ENCODE measurements at regions of chr3 and their contacts with region 1.

Region 1: DNA sequence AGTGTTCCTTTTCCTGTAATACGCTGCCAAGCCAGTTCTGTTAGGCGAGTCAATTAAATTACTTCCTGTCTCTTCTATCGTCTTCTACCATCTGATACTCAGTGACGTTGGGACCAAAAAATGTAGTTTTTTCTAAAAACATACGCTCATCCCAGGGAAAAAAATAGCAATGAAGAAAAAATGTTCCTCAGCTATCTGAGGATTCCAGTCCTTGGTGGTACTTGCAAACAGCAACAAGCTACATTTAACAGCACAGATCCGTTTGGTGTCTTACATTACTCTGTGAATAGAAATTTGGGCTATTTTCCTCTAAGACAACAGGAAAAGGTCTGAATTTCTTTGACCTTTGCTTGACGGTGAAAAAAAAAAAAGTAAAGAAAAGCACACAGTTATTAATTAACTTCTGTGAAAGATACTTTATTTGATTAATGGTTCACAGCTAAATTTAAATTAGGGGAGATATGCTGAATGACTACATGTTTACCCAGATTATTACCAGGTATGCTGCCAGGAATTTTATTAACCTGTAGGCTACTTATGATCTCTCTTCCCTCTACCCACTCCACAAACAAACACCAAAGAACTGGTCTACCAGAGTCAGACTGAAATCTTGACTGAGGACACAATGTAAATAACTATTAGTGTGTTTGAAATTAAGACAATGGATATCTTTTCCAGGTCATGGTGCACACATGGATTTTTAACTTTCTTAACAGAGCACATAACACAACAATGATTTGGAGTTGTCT is 254.3 kb upstream of the ZPLD1 start:
- DNase-seq: no peak
- H3K4me3 Mint-ChIP-seq: no peak overlapping the region
- H3K27ac Mint-ChIP-seq: no peak overlapping the region
- H3K4me1 Mint-ChIP-seq: peaks cover 23% of the 10 kb centered on the region
- H3K27me3 Mint-ChIP-seq: no peaks in the 10 kb centered on the region
- CTCF ChIP-seq: no peak

Region 2: DNA sequence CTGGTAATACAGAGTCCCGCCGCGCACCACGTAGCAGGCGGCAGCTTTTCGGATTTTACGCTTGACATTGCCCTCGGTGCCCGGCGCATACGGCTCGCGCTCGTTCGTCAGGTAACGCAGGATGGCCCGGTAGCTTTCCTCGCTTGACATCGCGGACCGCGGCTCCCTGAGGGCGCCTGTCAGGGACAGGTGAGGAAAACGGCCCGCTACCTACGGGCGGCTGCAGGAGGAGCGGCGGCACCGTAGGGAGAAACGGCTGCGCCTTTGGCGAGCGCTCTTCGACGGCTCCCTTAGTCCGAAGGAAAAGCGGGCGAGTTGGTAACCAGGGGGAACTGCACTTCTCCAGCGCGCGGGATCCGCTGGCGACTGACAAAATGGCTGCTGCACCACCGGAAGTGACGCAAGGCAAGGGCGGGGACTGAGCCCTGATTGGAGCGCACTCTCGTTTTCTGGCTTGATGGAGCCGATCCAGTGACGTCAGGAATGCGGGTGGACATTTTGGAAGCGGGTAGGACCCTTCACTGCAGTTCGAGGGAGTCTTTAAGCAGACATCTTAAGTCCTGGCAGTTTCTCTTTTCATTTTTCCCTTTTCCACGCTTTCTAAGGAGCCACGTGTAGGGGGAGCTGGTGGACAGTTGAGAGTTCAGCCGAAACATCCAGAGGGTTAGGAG is 503.6 kb before region 1 on chr3 and contains the start of gene ZBTB11:
- CTCF ChIA-PET with region 1: interaction called, 5 read pairs
- intact Hi-C with region 1: loop called (anchors 5 kb)
- DNase-seq: peak; percentile 99
- H3K4me3 Mint-ChIP-seq: peak within 1 kb of the TSS; percentile 80
- H3K27ac Mint-ChIP-seq: peak within 1 kb of the TSS; percentile 85
- H3K4me1 Mint-ChIP-seq: peaks cover 23% of the 10 kb centered on the region
- H3K27me3 Mint-ChIP-seq: no peaks in the 10 kb centered on the region
- CTCF ChIP-seq: no peak
- total RNA-seq, gene ZBTB11: 34.8 and 36.5 TPM in 2 replicates

Region 3: GRCh38 chr3:101809178-101810021 is 371.1 kb before region 1 on chr3:
- CTCF ChIA-PET with region 1: interaction called, 5 read pairs
- intact Hi-C with region 1: loop called (anchors 5 kb)
- DNase-seq: peak; percentile 34
- H3K4me3 Mint-ChIP-seq: no peak overlapping the region
- H3K27ac Mint-ChIP-seq: no peak overlapping the region
- H3K4me1 Mint-ChIP-seq: no peaks in the 10 kb centered on the region
- H3K27me3 Mint-ChIP-seq: no peaks in the 10 kb centered on the region
- CTCF ChIP-seq: peak; percentile 47

Region 4: DNA sequence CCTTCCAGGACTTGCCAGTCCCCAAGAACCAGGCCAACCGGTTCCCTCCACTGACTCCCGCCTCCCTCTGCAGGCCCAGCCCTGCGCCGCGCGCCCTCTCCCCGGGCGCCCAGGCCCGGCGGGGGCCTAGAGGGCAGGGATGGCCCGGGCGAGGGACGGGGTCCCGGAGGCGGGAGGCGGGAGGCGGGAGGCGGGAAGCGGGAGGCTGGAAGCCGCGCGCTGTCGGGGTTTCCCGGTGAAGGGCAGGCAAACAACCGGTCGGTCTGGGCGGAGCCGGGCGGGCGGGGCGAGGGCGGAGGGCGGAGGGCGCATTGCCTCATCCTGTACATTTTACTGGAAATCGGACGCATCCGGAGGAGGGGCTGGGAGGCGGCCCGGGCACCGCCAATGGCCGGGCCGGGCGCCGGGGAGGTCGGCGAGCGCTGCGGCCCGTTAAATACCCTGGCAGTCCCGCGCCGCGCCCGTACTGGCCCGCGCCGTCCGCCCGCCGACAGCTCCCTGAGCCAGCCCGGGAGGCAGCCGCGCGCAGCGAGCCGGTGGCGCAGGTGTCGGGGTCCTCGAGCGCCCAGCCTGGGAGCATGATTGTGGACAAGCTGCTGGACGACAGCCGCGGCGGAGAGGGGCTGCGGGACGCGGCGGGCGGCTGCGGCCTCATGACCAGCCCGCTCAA is 331.3 kb before region 1 on chr3 and contains the start of gene NFKBIZ:
- CTCF ChIA-PET with region 1: no interaction called
- intact Hi-C with region 1: no loop called
- DNase-seq: peak; percentile 94
- H3K4me3 Mint-ChIP-seq: peak within 1 kb of the TSS; percentile 75
- H3K27ac Mint-ChIP-seq: peak within 1 kb of the TSS; percentile 92
- H3K4me1 Mint-ChIP-seq: peaks cover 24% of the 10 kb centered on the region
- H3K27me3 Mint-ChIP-seq: no peaks in the 10 kb centered on the region
- CTCF ChIP-seq: no peak
- total RNA-seq, gene NFKBIZ: 217 and 227 TPM in 2 replicates

Region 5: DNA sequence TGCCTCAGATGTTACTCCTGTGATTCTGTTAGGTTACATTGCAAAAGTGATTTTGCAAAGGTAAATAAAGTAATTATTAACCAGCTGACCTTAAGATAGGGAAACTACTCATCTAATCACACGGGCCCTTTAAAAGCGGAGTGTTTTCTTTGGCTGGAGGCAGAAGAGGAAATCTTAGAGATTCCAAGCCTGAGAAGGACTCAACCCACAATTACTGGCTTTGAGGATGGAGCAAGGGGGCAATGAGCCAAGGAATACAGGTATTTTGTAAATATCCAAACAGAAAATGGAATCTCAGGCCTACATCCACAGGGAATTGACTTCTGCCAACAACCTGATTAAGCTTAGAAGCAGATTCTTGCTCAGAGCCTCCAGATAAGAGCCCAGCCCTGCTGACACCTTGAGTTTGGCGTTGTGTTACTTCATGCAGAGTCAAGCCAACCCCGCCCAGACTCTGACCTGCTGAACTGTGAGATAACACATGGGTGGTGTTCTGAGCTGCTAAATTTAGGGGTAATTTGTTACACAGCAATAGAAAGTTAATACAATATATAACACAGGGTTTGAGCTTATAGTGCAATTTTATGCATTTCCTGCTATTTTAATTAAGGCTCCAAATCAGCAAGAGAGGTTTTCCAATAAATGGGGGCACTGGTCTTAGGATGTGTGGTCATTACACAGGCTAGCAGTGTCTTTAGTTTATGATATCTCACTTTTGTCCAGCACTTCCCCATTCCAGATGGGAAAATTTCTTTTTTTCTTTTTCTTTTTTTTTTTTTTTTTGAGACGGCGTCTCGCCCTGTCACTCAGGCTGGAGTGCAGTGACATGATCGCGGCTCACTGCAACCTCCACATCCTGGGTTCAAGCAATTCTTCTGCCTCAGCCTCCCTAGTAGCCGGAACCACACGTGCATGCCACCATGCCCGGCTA is 311.7 kb before region 1 on chr3:
- CTCF ChIA-PET with region 1: interaction called, 9 read pairs
- intact Hi-C with region 1: loop called (anchors 5 kb)
- DNase-seq: peak; percentile 50
- H3K4me3 Mint-ChIP-seq: peak overlapping the region; percentile 28
- H3K27ac Mint-ChIP-seq: peak overlapping the region; percentile 95
- H3K4me1 Mint-ChIP-seq: peaks cover 51% of the 10 kb centered on the region
- H3K27me3 Mint-ChIP-seq: no peaks in the 10 kb centered on the region
- CTCF ChIP-seq: no peak

Region 6: DNA sequence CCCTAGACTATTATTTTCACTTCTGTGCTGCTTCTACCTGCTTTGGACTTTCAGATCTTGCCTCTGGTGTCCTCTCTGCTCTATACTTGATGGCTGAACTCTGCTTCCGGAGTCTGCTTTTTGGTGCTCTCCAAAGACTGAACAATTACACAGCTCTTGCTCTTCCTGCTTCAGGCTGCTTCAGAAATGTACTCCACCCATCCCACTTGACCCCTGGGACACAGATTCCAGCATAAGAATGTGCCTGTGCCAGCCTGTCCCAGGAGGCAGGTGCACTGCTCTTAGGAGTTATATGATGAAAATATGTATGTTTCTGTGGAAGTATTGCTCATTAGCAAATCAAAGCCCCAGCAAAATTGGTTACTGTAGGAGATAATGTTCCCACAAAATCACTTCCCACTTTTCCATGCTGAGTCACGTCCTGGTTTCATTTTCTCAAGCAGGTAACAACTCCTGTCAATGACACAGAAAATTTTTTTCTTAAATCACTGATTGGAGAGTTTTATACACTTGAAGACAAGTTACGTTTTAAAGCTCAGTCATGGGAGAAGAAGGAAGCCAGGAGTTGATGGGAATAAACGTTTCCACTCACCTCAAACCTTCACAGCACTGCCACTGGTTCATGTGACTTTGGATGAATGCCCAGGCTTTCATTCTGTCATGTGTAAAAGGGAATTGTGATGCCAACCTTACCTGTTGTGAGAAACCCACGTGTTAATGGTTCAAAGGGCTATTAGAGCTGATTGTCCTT is 14.9 kb after region 1 on chr3:
- CTCF ChIA-PET with region 1: interaction called, 10 read pairs
- intact Hi-C with region 1: loop called (anchors 2 kb)
- DNase-seq: peak; percentile 68
- H3K4me3 Mint-ChIP-seq: peak overlapping the region; percentile 29
- H3K27ac Mint-ChIP-seq: peak overlapping the region; percentile 94
- H3K4me1 Mint-ChIP-seq: peaks cover 60% of the 10 kb centered on the region
- H3K27me3 Mint-ChIP-seq: no peaks in the 10 kb centered on the region
- CTCF ChIP-seq: no peak